ENCODE measurements at regions of chrX and their contacts with region 1.

Region 1: GRCh38 chrX:110002300-110003166 is at the start of gene TMEM164:
- DNase-seq: peak; percentile 87 to 93 (median 89)
- ATAC-seq: peak; percentile 92 to 94 (median 93)
- H3K4me3 ChIP-seq: peak within 1 kb of the TSS; percentile 6 to 92 (median 66)
- H3K27ac ChIP-seq: peak within 1 kb of the TSS; percentile 68 to 94 (median 88)
- H3K4me1 ChIP-seq: peaks cover 0 to 38% (median 6%) of the 10 kb centered on the region in 12 donors
- H3K27me3 ChIP-seq: peaks cover 0 to 10% (median 0%) of the 10 kb centered on the region in 9 donors
- CTCF ChIP-seq: peak in 1 of 12 donors; percentile 21
- POLR2A ChIP-seq: peak in 1 of 2 donors; percentile 63
- total RNA-seq, gene TMEM164: 37.6 to 94.7 (median 50.3) TPM

Region 2: DNA sequence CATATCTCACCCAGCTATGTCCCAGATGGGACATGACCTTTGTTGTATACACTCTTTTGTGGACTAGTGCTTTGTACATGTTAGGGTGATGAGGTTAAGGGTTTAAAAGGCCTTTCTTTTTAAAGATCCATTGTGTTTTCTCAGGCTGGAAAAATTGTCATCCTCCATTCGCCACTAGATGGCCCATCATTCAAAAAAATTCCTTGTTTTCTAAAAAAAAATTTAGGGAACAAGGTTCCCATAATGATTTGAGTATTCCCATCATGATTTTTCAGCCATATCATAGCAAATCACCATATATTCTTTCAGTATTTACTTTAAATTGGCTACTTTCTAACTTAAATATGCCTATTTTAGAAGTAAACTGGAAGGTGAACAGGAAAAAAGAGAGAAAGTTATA is 91.5 kb before region 1 on chrX:
- intact Hi-C with region 1: loop called in 1 of 10 experiments (anchors 5 kb)
- DNase-seq: no peak
- ATAC-seq: no peak
- H3K4me3 ChIP-seq: no peak overlapping the region
- H3K27ac ChIP-seq: no peak overlapping the region
- H3K4me1 ChIP-seq: no peaks in the 10 kb centered on the region
- H3K27me3 ChIP-seq: peaks cover 0 to 38% (median 0%) of the 10 kb centered on the region in 9 donors
- CTCF ChIP-seq: peak in 11 of 12 donors; percentile 19 to 65 (median 48)
- POLR2A ChIP-seq: no peak

Region 3: GRCh38 chrX:109927663-109928273 is 74.8 kb before region 1 on chrX:
- intact Hi-C with region 1: loop called in 6 of 10 experiments (anchors 5 to 10 kb)
- DNase-seq: peak in 4 of 5 donors; percentile 16 to 45 (median 24)
- ATAC-seq: peak; percentile 84 to 96 (median 90)
- H3K4me3 ChIP-seq: no peak overlapping the region
- H3K27ac ChIP-seq: peak overlapping the region; percentile 51 to 92 (median 77)
- H3K4me1 ChIP-seq: peaks cover 0 to 10% (median 0%) of the 10 kb centered on the region in 12 donors
- H3K27me3 ChIP-seq: peaks cover 0 to 9% (median 0%) of the 10 kb centered on the region in 9 donors
- CTCF ChIP-seq: no peak
- POLR2A ChIP-seq: no peak

Region 4: GRCh38 chrX:110125446-110126162 is 123.1 kb after region 1 on chrX:
- intact Hi-C with region 1: loop called in 1 of 10 experiments (anchors 5 kb)
- DNase-seq: no peak
- ATAC-seq: peak; percentile 41 to 63 (median 54)
- H3K4me3 ChIP-seq: no peak overlapping the region
- H3K27ac ChIP-seq: peak overlapping the region in 2 of 12 donors; percentile 14 to 41
- H3K4me1 ChIP-seq: peaks cover 0 to 11% (median 0%) of the 10 kb centered on the region in 12 donors
- H3K27me3 ChIP-seq: peaks cover 0 to 7% (median 0%) of the 10 kb centered on the region in 9 donors
- CTCF ChIP-seq: peak in 5 of 12 donors; percentile 11 to 32 (median 13)
- POLR2A ChIP-seq: no peak

Region 5: GRCh38 chrX:110146521-110146920 is 144.0 kb after region 1 on chrX:
- intact Hi-C with region 1: loop called in 2 of 10 experiments (anchors 5 kb)
- DNase-seq: peak in 2 of 5 donors; percentile 10 to 30
- ATAC-seq: peak; percentile 48 to 68 (median 55)
- H3K4me3 ChIP-seq: no peak overlapping the region
- H3K27ac ChIP-seq: peak overlapping the region in 1 of 12 donors; percentile 13
- H3K4me1 ChIP-seq: peaks cover 0 to 34% (median 11%) of the 10 kb centered on the region in 12 donors
- H3K27me3 ChIP-seq: no peaks in the 10 kb centered on the region
- CTCF ChIP-seq: peak; percentile 42 to 69 (median 58)
- POLR2A ChIP-seq: no peak

Region 6: GRCh38 chrX:110156167-110156754 is 153.7 kb after region 1 on chrX:
- intact Hi-C with region 1: loop called in 1 of 10 experiments (anchors 5 kb)
- DNase-seq: no peak
- ATAC-seq: no peak
- H3K4me3 ChIP-seq: no peak overlapping the region
- H3K27ac ChIP-seq: no peak overlapping the region
- H3K4me1 ChIP-seq: peaks cover 0 to 10% (median 4%) of the 10 kb centered on the region in 12 donors
- H3K27me3 ChIP-seq: peaks cover 0 to 5% (median 0%) of the 10 kb centered on the region in 9 donors
- CTCF ChIP-seq: peak; percentile 22 to 62 (median 52)
- POLR2A ChIP-seq: no peak

Measured in heart left ventricle (tissue), 16 donors.